Transverse colon (tissue), 4 donors: ENCODE measurements at regions of chr6 and their contacts with region 1.

Region 1: GRCh38 chr6:3719462-3720308 is 31.8 kb downstream of the PXDC1 start:
- DNase-seq: no peak
- H3K4me3 ChIP-seq: no peak overlapping the region
- H3K27ac ChIP-seq: no peak overlapping the region
- H3K4me1 ChIP-seq: peaks cover 0 to 8% (median 4%) of the 10 kb centered on the region in 4 donors
- H3K27me3 ChIP-seq: no peaks in the 10 kb centered on the region
- CTCF ChIP-seq: no peak
- EP300 ChIP-seq: no peak
- POLR2A ChIP-seq: no peak

Region 2: GRCh38 chr6:3324262-3324942 is 395.3 kb before region 1 on chr6:
- in situ Hi-C with region 1: no loop called
- intact Hi-C with region 1: no loop called
- DNase-seq: no peak
- H3K4me3 ChIP-seq: no peak overlapping the region
- H3K27ac ChIP-seq: peak overlapping the region in 2 of 4 donors; percentile 14 to 45
- H3K4me1 ChIP-seq: peaks cover 8 to 15% (median 10%) of the 10 kb centered on the region in 4 donors
- H3K27me3 ChIP-seq: no peaks in the 10 kb centered on the region
- CTCF ChIP-seq: no peak
- EP300 ChIP-seq: no peak
- POLR2A ChIP-seq: no peak

Region 3: GRCh38 chr6:3669916-3670315 is 49.8 kb before region 1 on chr6:
- in situ Hi-C with region 1: no loop called
- intact Hi-C with region 1: no loop called
- DNase-seq: no peak
- H3K4me3 ChIP-seq: no peak overlapping the region
- H3K27ac ChIP-seq: no peak overlapping the region
- H3K4me1 ChIP-seq: peaks cover 0 to 11% (median 3%) of the 10 kb centered on the region in 4 donors
- H3K27me3 ChIP-seq: no peaks in the 10 kb centered on the region
- CTCF ChIP-seq: no peak
- EP300 ChIP-seq: no peak
- POLR2A ChIP-seq: no peak

Region 4: GRCh38 chr6:3683331-3683730 is 36.4 kb before region 1 on chr6:
- in situ Hi-C with region 1: no loop called
- intact Hi-C with region 1: loop called (anchors 1 kb)
- DNase-seq: no peak
- H3K4me3 ChIP-seq: no peak overlapping the region
- H3K27ac ChIP-seq: no peak overlapping the region
- H3K4me1 ChIP-seq: no peaks in the 10 kb centered on the region
- H3K27me3 ChIP-seq: no peaks in the 10 kb centered on the region
- CTCF ChIP-seq: no peak
- EP300 ChIP-seq: no peak
- POLR2A ChIP-seq: no peak

Region 5: GRCh38 chr6:4114123-4114522 is 394.4 kb after region 1 on chr6:
- in situ Hi-C with region 1: no loop called
- intact Hi-C with region 1: no loop called
- DNase-seq: no peak
- H3K4me3 ChIP-seq: no peak overlapping the region
- H3K27ac ChIP-seq: no peak overlapping the region
- H3K4me1 ChIP-seq: peaks cover 0 to 25% (median 9%) of the 10 kb centered on the region in 4 donors
- H3K27me3 ChIP-seq: no peaks in the 10 kb centered on the region
- CTCF ChIP-seq: no peak
- EP300 ChIP-seq: no peak
- POLR2A ChIP-seq: no peak

Region 6: GRCh38 chr6:4635666-4636065 is 916.0 kb after region 1 on chr6:
- in situ Hi-C with region 1: no loop called
- intact Hi-C with region 1: no loop called
- DNase-seq: no peak
- H3K4me3 ChIP-seq: no peak overlapping the region
- H3K27ac ChIP-seq: no peak overlapping the region
- H3K4me1 ChIP-seq: no peaks in the 10 kb centered on the region
- H3K27me3 ChIP-seq: no peaks in the 10 kb centered on the region
- CTCF ChIP-seq: no peak
- EP300 ChIP-seq: no peak
- POLR2A ChIP-seq: no peak